ENCODE measurements at regions of chr1 and their contacts with region 1.

Region 1: GRCh38 chr1:2586154-2587070 is at the start of gene PRXL2B:
- DNase-seq: peak; percentile 93 to 98 (median 95)
- H3K4me3 ChIP-seq: peak within 1 kb of the TSS; percentile 94
- H3K4me3 Mint-ChIP-seq: peak within 1 kb of the TSS; percentile 89 to 99 (median 93)
- H3K27ac ChIP-seq: peak within 1 kb of the TSS; percentile 95
- H3K27ac Mint-ChIP-seq: peak within 1 kb of the TSS; percentile 86 to 98 (median 98)
- H3K4me1 ChIP-seq: peaks cover 37% of the 10 kb centered on the region
- H3K4me1 Mint-ChIP-seq: peaks cover 26 to 52% (median 30%) of the 10 kb centered on the region in 3 donors
- H3K27me3 ChIP-seq: no peaks in the 10 kb centered on the region
- H3K27me3 Mint-ChIP-seq: no peaks in the 10 kb centered on the region
- total RNA-seq, gene PRXL2B: 41.3 to 45.5 TPM

Region 2: DNA sequence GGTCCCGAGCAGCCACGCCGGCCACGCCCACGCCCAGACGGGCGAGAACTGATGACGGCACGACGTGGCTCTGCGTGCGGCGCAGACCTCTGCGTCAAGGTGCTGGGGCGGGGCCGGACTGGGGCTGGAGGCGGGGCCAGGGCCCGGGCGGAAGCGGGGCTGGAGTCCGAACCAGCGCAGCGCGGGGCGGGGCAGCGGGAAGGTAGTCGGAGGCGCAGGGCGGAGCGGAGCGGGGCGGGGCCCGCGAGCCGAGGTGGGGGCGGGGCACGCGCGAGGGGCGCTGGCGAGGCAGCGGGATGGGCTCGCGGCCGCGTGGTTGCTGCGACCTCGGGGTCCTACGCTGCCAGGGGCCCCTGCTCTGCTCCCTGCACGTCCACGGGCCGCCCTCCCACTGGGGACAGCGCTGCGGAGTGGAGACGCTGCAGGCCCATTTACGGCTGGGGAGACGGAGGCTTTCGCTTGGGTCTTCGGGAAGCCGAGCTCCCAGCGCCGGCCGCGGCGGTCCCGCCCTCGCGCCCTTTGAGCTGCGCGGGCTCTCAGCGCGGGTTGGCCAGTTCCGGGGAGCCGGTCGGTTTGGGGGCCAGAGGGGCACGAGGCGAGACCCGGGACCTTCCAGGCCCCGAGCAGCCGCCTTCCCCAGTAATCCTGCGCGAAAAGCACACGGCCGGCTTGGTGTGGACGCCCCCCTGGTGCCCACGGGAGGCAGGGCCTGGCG is 173.7 kb before region 1 on chr1 and contains the start of gene PEX10:
- CTCF ChIA-PET with region 1: interaction called, 11 read pairs
- POLR2A ChIA-PET with region 1: interaction called, 10 read pairs
- DNase-seq: peak; percentile 98 to 99 (median 98)
- H3K4me3 ChIP-seq: peak within 1 kb of the TSS; percentile 78
- H3K4me3 Mint-ChIP-seq: peak within 1 kb of the TSS; percentile 79 to 94 (median 87)
- H3K27ac ChIP-seq: peak within 1 kb of the TSS; percentile 90
- H3K27ac Mint-ChIP-seq: peak within 1 kb of the TSS; percentile 81 to 97 (median 88)
- H3K4me1 ChIP-seq: peaks cover 52% of the 10 kb centered on the region
- H3K4me1 Mint-ChIP-seq: peaks cover 30 to 51% (median 30%) of the 10 kb centered on the region in 3 donors
- H3K27me3 ChIP-seq: no peaks in the 10 kb centered on the region
- H3K27me3 Mint-ChIP-seq: no peaks in the 10 kb centered on the region
- total RNA-seq, gene PEX10: 25.6 to 26.2 TPM

Region 3: DNA sequence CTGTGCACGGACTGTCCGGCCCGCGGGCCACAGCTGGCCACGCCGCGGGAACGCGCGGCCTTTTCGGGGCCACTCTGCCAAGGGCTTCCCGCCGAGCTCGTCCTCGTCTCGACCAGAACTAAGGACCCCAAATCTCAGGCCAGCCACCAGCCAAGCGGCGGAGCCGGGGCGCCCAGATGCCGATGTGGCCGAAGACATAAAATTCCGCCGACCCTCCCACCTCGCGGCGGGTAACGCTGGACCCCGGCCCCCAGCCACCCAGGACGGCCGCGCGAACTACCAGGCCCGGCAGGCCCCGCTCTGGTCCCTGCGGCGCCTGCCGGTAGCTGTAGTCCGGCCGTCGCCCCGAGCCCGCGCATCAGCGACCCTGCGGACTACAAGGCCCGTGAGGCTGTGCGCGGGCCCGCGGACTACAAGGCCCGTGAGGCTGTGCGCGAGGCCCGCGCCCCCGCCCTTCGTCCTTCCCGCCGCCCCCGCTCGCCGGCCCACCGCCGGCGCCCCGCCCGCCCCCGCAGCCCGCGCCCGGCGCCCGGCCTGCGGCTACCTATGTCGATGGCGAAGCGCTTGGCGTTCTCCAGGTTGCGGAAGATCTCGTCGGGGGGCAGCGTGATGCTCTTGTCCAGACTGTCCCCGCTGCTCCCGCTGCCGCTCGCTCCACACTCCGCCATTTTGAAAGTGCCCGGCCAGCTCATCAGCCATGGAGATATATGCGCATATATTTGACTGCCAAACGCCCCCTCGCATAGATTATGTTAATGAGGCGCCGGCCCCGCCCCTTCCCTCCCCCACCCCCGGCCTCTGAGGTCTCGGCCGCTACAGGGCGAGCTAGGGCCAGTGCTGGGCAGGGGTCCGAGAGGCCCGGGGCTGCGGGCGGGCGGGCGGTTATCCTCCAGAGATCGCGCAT is 60.2 kb before region 1 on chr1 and contains the start of gene PANK4:
- CTCF ChIA-PET with region 1: interaction called, 4 read pairs
- POLR2A ChIA-PET with region 1: interaction called, 15 read pairs
- DNase-seq: peak; percentile 79 to 90 (median 85)
- H3K4me3 ChIP-seq: peak within 1 kb of the TSS; percentile 93
- H3K4me3 Mint-ChIP-seq: peak within 1 kb of the TSS; percentile 88 to 99 (median 90)
- H3K27ac ChIP-seq: peak within 1 kb of the TSS; percentile 62
- H3K27ac Mint-ChIP-seq: peak within 1 kb of the TSS; percentile 86 to 98 (median 97)
- H3K4me1 ChIP-seq: peaks cover 57% of the 10 kb centered on the region
- H3K4me1 Mint-ChIP-seq: peaks cover 40 to 69% (median 44%) of the 10 kb centered on the region in 3 donors
- H3K27me3 ChIP-seq: peaks cover 7% of the 10 kb centered on the region
- H3K27me3 Mint-ChIP-seq: peaks cover 9 to 11% of the 10 kb centered on the region in 2 donors
- total RNA-seq, gene PANK4: 40.3 to 46.3 TPM

Region 4: DNA sequence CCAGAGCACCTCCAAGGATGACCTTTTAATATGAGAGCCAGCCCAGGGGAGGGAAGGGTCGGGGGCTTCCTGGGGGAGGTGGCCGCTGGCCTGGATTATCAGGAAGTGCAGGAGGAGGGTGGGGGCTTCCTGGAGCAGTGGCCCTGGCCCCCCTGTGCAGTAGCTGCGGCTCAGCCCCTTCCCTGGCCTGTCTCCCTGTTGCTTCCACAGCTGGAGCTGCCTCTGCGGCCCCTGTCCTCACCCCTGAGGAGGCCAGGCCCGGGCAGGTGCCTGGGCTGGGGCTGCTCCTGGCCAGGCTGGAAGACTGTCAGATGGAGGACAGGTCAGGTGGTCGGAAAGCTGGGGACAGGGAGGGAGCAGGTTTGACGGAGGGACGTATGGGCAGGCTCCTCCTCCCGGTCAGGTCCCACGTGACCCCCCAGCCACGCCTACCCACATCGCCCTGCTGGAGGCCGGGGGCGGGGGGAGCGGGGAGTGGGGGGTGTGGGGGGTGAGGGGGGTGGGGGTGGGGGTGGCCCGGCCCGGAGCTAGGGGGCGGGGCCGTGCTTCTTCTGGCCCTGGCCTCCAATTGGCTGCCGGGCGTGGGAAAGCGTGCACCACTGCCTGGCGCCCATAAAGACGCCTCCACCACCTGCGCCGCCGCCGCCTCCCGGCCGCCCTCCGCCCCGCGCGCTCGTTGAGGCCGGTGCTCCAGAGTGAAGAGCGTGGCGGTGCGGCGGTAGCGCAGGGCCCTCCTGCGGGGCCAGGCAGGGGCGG is 40.5 kb before region 1 on chr1:
- CTCF ChIA-PET with region 1: interaction called, 33 read pairs
- POLR2A ChIA-PET with region 1: interaction called, 48 read pairs
- DNase-seq: peak; percentile 86 to 92 (median 88)
- H3K4me3 ChIP-seq: peak overlapping the region; percentile 96
- H3K4me3 Mint-ChIP-seq: peak overlapping the region; percentile 91 to 98 (median 94)
- H3K27ac ChIP-seq: peak overlapping the region; percentile 92
- H3K27ac Mint-ChIP-seq: peak overlapping the region; percentile 50 to 100 (median 96)
- H3K4me1 ChIP-seq: peaks cover 52% of the 10 kb centered on the region
- H3K4me1 Mint-ChIP-seq: peaks cover 13 to 53% (median 19%) of the 10 kb centered on the region in 3 donors
- H3K27me3 ChIP-seq: no peaks in the 10 kb centered on the region
- H3K27me3 Mint-ChIP-seq: no peaks in the 10 kb centered on the region

Region 5: GRCh38 chr1:2561898-2562545 is 24.4 kb before region 1 on chr1:
- CTCF ChIA-PET with region 1: interaction called, 34 read pairs
- POLR2A ChIA-PET with region 1: interaction called, 41 read pairs
- DNase-seq: no peak
- H3K4me3 ChIP-seq: no peak overlapping the region
- H3K4me3 Mint-ChIP-seq: no peak overlapping the region
- H3K27ac ChIP-seq: no peak overlapping the region
- H3K27ac Mint-ChIP-seq: peak overlapping the region in 2 of 8 donors; percentile 45 to 50
- H3K4me1 ChIP-seq: peaks cover 18% of the 10 kb centered on the region
- H3K4me1 Mint-ChIP-seq: peaks cover 8 to 36% (median 12%) of the 10 kb centered on the region in 3 donors
- H3K27me3 ChIP-seq: no peaks in the 10 kb centered on the region
- H3K27me3 Mint-ChIP-seq: peaks cover 0 to 2% of the 10 kb centered on the region in 2 donors